Caco-2 (cell line): ENCODE measurements at regions of chr16 and their contacts with region 1.

Region 1: DNA sequence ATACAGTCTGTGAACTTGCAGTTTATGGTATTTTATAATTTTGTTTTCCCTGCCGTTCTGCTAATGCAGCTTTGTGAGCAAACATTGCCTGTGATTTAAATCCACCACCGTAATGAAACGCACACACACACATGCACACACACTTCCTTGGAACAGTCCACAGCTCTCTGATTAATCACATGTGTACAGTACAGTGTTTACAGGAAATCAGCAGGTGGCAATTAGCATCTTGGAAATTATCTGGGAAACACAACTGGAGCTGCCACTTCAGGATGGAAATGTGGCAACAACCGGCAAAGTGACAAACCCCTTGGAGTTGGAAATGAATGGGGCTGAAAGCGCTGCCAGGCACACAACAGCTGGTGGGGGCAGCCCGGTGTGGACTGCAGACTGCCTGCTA is 12.9 kb upstream of the ZKSCAN2 start:
- DNase-seq: no peak
- H3K4me3 ChIP-seq: no peak overlapping the region
- H3K4me3 Mint-ChIP-seq: no peak overlapping the region
- H3K27ac Mint-ChIP-seq: no peak overlapping the region
- H3K4me1 ChIP-seq: no peaks in the 10 kb centered on the region
- H3K4me1 Mint-ChIP-seq: no peaks in the 10 kb centered on the region
- H3K27me3 ChIP-seq: no peaks in the 10 kb centered on the region
- H3K27me3 Mint-ChIP-seq: no peaks in the 10 kb centered on the region
- CTCF ChIP-seq: no peak

Region 2: DNA sequence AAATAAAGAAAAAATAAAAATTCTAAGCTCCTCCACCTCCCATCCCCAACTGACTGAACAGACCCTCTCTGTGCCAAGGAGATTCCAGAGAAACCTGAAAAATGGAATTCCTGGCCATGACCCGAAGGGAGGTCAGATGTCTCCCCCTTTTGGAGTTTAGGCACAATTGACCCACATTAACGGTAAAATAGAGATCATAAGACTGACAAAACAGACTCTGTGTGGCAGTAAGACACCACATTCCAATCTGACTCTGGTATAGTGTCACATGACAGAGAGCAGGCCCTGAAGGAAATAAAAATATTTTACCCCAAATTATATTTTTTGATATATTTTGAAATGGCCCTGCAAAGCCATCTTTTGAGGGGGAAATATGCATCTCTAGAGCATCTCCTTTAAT is 102.1 kb after region 1 on chr16:
- CTCF ChIA-PET with region 1: no interaction called
- POLR2A ChIA-PET with region 1: no interaction called
- intact Hi-C with region 1: loop called (anchors 10 kb)
- DNase-seq: no peak
- H3K4me3 ChIP-seq: no peak overlapping the region
- H3K4me3 Mint-ChIP-seq: no peak overlapping the region
- H3K27ac Mint-ChIP-seq: no peak overlapping the region
- H3K4me1 ChIP-seq: peaks cover 22% of the 10 kb centered on the region
- H3K4me1 Mint-ChIP-seq: no peaks in the 10 kb centered on the region
- H3K27me3 ChIP-seq: no peaks in the 10 kb centered on the region
- H3K27me3 Mint-ChIP-seq: no peaks in the 10 kb centered on the region
- CTCF ChIP-seq: no peak

Region 3: GRCh38 chr16:25481646-25482045 is 211.1 kb after region 1 on chr16:
- CTCF ChIA-PET with region 1: no interaction called
- POLR2A ChIA-PET with region 1: no interaction called
- intact Hi-C with region 1: loop called (anchors 10 kb)
- DNase-seq: peak; percentile 22 to 35
- H3K4me3 ChIP-seq: no peak overlapping the region
- H3K4me3 Mint-ChIP-seq: no peak overlapping the region
- H3K27ac Mint-ChIP-seq: peak overlapping the region; percentile 27
- H3K4me1 ChIP-seq: peaks cover 17% of the 10 kb centered on the region
- H3K4me1 Mint-ChIP-seq: peaks cover 12% of the 10 kb centered on the region
- H3K27me3 ChIP-seq: no peaks in the 10 kb centered on the region
- H3K27me3 Mint-ChIP-seq: no peaks in the 10 kb centered on the region
- CTCF ChIP-seq: no peak